ENCODE measurements at regions of chr2 and their contacts with region 1.

Region 1: DNA sequence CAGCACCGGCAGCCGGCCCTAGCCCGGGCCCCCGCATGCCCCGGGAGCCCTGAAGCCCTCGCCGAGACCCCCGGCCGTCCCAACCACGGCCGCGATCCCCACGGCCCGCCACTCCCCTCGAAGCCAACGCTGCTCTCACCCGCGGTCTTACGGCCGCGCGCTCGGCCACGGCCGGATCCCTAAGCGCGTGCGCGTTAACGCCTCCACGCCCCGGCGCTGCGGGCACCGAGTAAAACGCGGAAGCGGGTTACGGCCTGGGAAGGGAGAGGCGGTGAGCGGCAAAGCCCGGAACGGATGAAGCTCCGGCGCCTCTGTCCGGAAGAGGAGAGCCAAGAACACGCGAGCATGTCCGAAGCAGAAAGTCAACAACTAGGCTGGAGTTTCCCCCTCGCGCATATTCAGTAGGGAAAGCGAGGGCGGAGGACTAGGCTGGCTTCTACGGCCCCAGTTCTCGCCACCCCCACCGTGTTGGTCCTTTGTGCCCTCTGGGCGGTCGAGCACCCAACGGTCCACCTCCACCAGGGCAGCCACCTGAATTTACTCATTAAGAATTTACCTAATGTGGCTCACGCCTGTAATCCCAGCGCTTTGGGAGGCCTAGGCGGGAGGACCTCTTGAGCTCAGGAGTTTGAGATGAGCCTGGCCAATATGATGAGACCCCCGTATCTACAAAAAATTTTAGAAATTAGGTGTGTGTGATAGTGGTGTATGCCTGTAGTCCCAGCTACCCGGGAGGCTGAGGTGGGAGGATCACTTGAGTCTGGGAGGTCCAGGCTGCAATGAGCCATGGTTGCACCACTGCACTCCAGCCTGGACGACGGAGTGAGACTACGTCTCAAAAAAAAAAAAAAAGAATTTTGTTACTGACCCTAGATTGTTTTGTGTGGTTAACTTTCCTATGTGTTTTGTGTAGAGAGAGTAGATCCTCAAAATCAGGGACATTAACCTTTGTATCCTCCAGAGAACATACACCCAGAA is at the start of gene KANSL3:
- DNase-seq: peak; percentile 92
- ATAC-seq: peak; percentile 89 to 90
- total RNA-seq, gene KANSL3: 26.9 to 27.6 TPM

Region 2: DNA sequence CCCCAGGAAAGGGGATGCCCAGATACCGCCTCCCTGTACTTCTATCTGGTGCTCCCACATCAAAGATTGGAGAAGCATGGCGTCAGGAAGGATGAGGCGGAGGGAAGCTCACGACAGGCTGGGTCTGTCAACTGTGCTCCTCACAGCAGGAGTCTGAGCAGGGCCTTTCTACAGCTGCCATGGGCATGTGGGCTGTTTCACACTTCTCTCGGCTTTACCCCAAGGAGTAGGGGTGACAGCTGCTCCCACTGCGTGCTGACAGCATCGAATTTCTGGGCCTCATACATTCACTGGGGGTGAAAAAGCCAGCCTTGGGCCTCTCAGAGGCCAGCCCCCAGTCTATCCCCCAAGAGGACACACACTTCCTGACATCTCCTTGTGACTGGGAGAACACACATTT is 154.3 kb before region 1 on chr2:
- intact Hi-C with region 1: no loop called
- DNase-seq: no peak
- ATAC-seq: no peak

Region 3: DNA sequence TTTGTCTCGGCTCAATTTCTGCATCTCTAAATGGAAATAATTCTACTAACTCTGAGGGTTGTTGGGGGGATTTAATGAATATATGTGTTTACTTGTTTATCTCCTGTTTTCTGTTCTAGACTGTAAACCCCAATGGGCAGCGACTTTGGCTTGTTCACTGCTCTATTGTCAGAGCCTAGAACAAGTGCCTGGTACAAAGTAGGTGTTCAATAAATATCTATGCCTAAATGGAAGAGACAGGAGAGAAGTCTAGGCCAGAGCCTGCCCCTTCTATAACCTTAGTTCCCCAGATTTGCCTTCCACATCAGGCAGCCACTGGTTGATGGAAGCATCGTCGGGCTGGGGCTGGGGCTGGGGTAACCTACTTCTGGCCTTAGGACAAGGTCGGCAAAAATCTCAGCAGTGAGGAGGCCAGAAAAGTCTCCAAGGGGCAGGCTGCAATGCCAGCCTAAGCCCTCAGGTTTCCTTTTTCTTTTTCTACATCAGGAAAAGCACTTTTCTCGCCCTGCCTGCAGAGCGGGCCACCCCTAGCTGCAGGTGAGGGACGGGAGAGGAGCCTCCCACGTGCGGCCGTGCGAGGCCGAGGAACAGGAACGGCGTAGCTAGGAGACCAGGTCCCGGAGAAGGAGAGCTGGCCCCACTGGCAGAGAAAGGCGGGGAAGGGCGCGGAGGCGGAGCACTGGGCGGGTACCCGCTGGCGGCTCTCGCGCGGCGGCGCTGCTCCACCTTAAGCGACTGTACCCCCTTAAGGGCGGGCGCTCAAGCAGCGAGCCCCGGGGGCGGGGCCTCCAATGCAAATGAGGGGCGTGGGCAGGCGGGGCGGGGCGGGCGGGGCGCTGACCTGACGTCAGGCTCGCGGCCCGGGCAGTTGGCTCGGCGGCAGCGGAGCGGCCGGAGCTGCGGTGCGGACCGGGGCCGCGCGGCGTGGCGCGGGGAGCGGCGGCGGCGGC is 121.9 kb after region 1 on chr2 and contains the start of gene CNNM4:
- intact Hi-C with region 1: loop called in 1 of 2 experiments (anchors 5 kb)
- DNase-seq: peak; percentile 96
- ATAC-seq: peak; percentile 96
- total RNA-seq, gene CNNM4: 16.8 to 29.5 TPM

Region 4: DNA sequence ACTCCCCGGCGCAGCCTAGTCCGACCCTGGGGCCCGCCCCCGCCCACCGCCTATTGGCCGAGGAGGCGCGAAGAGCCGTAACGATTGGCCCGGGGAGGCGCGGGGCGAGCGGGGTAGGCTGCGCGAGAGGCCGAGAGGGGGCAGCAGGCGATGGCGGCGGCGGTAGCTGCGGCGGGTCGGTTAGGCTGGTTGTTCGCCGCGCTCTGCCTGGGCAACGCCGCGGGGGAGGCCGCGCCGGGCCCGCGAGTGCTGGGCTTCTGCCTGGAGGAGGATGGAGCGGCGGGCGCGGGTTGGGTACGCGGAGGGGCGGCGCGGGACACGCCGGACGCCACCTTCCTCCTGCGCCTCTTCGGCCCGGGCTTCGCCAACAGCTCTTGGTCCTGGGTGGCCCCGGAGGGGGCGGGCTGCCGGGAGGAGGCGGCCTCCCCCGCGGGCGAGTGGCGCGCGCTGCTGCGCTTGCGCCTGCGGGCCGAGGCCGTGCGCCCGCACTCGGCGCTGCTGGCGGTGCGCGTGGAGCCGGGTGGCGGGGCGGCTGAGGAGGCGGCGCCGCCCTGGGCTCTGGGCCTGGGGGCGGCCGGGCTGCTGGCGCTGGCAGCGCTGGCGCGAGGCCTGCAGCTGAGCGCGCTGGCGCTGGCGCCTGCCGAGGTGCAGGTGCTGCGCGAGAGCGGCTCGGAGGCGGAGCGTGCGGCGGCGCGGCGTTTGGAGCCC is 177.8 kb after region 1 on chr2 and contains the start of gene CNNM3:
- intact Hi-C with region 1: loop called in 1 of 2 experiments (anchors 10 kb)
- DNase-seq: peak; percentile 98
- ATAC-seq: peak; percentile 97
- total RNA-seq, gene CNNM3: 9.6 to 10.3 TPM